ENCODE measurements at regions of chr11 and their contacts with region 1.

Region 1: GRCh38 chr11:34585735-34586487 is 35.0 kb upstream of the EHF start:
- DNase-seq: no peak
- ATAC-seq: no peak
- H3K4me3 Mint-ChIP-seq: no peak overlapping the region
- H3K27ac Mint-ChIP-seq: no peak overlapping the region
- H3K4me1 Mint-ChIP-seq: peaks cover 4% of the 10 kb centered on the region
- H3K27me3 Mint-ChIP-seq: peaks cover 30% of the 10 kb centered on the region

Region 2: DNA sequence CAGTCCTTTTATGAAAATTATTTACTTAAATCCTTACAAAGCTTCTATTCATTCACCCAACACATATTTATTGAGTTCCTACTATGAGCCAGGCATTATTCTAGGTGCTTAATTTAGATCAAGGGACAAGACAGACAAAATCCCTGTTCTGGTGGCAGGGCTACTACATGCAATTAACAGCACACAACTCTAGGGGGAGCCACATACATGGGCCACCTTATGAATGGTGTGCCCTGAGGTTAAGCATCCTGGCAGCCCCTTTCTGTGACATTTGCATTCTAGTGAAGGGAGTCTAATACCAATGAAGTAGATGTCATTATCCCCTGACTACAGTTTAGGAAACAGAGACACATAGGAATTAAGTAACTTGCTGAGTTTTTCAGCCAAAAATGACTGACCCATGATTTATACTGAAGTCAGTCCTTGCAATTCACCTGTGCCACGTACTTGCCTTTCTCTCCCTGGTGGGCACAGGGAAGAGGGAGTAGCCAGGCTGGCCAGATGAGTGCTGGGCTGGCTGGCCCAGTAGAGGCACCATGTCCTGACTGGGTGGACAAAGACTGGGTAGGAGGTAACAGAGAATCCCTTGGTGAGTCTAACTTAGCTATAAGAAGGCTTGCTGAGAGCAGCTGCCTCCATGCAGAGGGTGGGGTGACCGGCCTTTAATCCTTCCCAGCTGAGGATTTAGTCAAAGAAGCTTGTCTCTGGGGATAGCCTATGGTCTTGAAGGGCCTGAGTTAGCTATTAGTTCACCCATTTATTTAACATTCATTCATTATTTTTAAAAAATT is 20.3 kb before region 1 on chr11:
- CTCF ChIA-PET with region 1: interaction called, 10 read pairs
- POLR2A ChIA-PET with region 1: no interaction called
- intact Hi-C with region 1: no loop called
- DNase-seq: peak; percentile 43
- ATAC-seq: peak; percentile 57
- H3K4me3 Mint-ChIP-seq: no peak overlapping the region
- H3K27ac Mint-ChIP-seq: no peak overlapping the region
- H3K4me1 Mint-ChIP-seq: no peaks in the 10 kb centered on the region
- H3K27me3 Mint-ChIP-seq: peaks cover 34% of the 10 kb centered on the region

Region 3: GRCh38 chr11:34600339-34601084 is 14.6 kb after region 1 on chr11:
- CTCF ChIA-PET with region 1: interaction called, 15 read pairs
- POLR2A ChIA-PET with region 1: no interaction called
- intact Hi-C with region 1: no loop called
- DNase-seq: no peak
- ATAC-seq: no peak
- H3K4me3 Mint-ChIP-seq: no peak overlapping the region
- H3K27ac Mint-ChIP-seq: no peak overlapping the region
- H3K4me1 Mint-ChIP-seq: peaks cover 8% of the 10 kb centered on the region
- H3K27me3 Mint-ChIP-seq: peaks cover 6% of the 10 kb centered on the region

Region 4: GRCh38 chr11:34890812-34891211 is 304.9 kb after region 1 on chr11:
- CTCF ChIA-PET with region 1: interaction called, 31 read pairs
- POLR2A ChIA-PET with region 1: no interaction called
- intact Hi-C with region 1: loop called (anchors 1 kb)
- DNase-seq: no peak
- ATAC-seq: no peak
- H3K4me3 Mint-ChIP-seq: no peak overlapping the region
- H3K27ac Mint-ChIP-seq: no peak overlapping the region
- H3K4me1 Mint-ChIP-seq: no peaks in the 10 kb centered on the region
- H3K27me3 Mint-ChIP-seq: no peaks in the 10 kb centered on the region

Measured in activated CD4-positive, alpha-beta T cell treated with anti-CD3 and anti-CD28 coated beads for 36 hours (primary cell).